Posterior vena cava (tissue), 2 donors: ENCODE measurements at regions of chr3 and their contacts with region 1.

Region 1: DNA sequence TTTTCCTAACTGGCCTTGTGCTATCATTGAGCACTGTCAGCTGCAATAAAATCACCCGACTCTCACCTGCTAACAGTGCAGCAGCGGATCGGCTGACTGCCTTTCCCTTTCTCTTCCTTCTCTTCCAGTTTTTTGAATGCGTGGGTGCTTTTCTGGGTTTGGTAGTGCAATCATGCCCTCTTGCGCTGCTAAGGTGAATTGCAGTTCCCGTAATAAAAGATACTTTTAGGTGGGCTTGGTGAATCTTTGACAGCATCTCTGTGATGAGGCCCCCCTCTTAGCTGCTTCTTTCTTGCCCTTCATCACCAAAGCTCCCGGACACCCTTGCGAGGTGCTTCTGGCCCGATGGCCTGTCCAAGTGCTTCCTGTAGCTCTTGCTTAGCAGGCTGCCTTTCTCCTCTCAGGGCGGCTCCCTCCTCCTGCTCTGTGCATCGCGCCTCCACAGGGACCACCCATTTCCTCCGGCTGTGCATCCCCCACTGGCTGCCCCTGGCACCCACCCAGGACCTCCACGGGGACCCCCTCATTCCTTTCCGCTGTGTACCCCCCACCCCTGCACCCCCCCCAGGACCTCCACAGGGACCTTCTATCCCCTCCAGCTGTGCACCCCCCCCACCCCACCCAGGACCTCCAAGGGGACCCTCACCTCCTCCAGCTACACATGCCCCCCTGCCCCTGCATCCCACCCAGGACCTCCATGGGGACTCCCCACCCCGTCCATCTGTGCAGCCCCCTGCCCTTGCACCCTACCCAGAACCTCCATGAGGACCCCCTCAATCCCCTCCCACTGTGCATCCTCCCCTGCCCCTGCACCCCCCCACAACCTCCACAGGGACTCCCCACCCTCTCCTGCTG is 50.8 kb upstream of the RPL32 start:
- DNase-seq: no peak

Region 2: DNA sequence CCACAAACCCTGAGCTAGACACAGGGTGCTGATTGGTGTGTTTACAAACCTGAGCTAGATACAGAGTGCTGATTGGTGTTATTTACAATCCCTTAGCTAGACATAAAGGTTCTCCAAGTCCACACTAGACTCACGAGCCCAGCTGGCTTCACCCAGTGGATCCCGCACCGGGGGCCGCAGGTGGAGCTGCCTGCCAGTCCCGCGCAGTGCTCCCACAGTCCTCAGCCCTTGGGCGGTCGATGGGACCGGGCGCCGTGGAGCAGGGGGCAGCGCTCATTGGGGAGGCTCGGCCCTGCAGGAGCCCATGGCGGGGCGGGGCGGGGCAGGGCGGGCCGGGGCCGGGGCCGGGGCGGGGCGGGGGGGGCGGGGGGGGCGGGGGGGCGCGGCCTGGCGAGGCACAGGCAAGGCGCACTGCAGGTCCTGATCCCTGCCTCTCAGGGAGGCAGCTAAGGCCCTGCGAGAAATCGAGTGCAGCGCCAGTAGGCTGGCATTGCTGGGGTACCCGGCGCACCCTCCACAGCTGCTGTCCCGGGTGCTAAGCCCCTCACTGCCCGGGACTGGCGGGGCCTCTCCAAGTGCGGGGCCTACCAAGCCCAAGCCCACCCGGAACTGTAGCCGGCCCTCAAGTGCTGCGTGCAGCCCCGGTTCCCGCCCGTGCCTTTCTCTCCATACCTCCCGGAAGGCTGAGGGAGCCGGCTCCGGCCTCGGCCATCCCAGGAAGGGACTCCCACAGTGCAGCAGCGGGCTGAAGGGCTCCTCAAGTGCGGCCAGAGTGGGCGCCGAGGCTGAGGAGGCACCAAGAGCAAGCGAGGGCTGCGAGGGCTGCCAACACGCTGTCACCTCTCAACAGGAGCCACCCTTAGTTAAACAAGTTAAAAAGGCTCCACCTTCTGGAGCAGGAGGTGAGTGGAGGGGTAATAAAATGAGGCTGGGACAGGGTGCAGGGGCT is 123.4 kb before region 1 on chr3:
- intact Hi-C with region 1: no loop called
- DNase-seq: peak; percentile 79

Region 3: GRCh38 chr3:12868039-12869034 is 23.9 kb before region 1 on chr3:
- intact Hi-C with region 1: loop called in 1 of 2 experiments (anchors 2 kb)
- DNase-seq: peak; percentile 95

Region 4: DNA sequence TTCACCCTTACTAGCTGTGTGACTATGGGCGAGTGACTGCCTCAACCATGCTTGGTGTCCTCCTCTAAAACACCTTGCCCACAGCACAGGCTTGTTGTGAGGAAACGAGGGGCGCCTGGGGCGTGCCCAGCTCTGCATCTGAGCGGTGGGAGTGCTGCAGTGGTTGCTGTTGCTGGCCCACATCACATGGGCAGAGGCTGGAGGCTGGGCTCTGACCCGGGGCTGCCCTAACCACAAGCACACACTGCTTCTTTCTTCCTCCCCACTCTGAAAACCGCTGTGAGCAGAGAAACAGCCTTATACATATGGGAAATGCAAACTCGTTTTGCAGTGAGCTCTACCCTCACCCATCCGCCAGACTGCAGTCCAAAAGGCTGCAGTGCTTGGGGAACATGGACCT is 23.9 kb after region 1 on chr3:
- intact Hi-C with region 1: no loop called
- DNase-seq: no peak

Region 5: DNA sequence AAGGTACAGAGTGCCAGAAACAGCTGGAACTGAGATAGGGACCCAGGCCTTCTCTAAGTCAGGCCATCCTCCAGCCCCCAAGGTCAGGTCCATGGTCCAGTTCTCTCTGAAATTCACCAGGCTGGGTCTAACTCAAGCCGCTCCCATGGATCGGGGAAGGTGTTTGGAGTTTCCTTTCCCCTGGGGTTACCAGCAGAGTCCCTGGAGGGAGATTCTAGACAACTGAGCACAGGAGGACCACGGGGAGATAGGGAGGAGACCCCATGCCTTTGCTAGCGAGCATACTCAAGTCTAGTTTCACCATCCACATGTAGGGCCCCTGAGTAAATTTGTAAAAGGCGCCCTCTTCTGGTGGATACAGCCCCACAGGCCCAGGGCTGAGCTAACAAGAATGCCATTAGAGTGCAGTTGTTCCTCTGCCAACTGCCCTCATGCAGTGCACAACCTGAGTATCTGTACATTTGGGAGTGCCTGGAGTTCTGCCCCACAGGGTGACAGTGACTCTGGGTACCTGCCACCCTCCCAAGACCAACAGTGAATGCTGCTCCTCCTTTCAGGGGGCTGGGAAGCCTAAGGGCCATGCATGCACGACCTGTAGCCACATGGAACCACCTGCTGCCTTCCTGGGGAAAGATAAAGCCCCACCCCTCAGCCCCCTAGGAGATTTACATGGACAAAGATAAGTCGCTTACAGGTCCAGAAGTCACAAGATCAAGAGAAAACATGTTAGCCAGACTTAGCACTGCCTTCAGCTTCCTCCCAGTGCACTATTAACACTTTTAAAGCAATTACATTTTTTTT is 92.0 kb after region 1 on chr3:
- intact Hi-C with region 1: loop called in 1 of 2 experiments (anchors 5 kb)
- DNase-seq: peak; percentile 86